ENCODE measurements at regions of chr17 and their contacts with region 1.

Region 1: GRCh38 chr17:45317112-45317928 is 500 bp upstream of the MAP3K14 start:
- DNase-seq: peak; percentile 100
- ATAC-seq: peak; percentile 85
- H3K4me3 ChIP-seq: peak overlapping the region; percentile 42
- H3K27ac ChIP-seq: peak overlapping the region; percentile 62
- H3K4me1 ChIP-seq: peaks cover 47% of the 10 kb centered on the region
- H3K27me3 ChIP-seq: no peaks in the 10 kb centered on the region
- CTCF ChIP-seq: no peak
- POLR2A ChIP-seq: no peak
- RAD21 ChIP-seq: 0 out of 2 replicates have a peak, but pooled peaks have one; percentile 14

Region 2: GRCh38 chr17:45021607-45022287 is 295.6 kb before region 1 on chr17:
- CTCF ChIA-PET with region 1: no interaction called
- POLR2A ChIA-PET with region 1: no interaction called
- dilution Hi-C with region 1: no loop called
- in situ Hi-C with region 1: no loop called
- intact Hi-C with region 1: no loop called
- DNase-seq: peak; percentile 47
- ATAC-seq: peak; percentile 77
- H3K4me3 ChIP-seq: peak overlapping the region; percentile 29
- H3K27ac ChIP-seq: peak overlapping the region; percentile 72
- H3K4me1 ChIP-seq: peaks cover 26% of the 10 kb centered on the region
- H3K27me3 ChIP-seq: peaks cover 4% of the 10 kb centered on the region; the same call in 1 of the 2 replicates
- CTCF ChIP-seq: peak; percentile 95
- POLR2A ChIP-seq: no peak
- RAD21 ChIP-seq: peak; percentile 91

Region 3: GRCh38 chr17:45197555-45198334 is 119.6 kb before region 1 on chr17:
- CTCF ChIA-PET with region 1: no interaction called
- POLR2A ChIA-PET with region 1: no interaction called
- dilution Hi-C with region 1: no loop called
- in situ Hi-C with region 1: no loop called
- intact Hi-C with region 1: no loop called
- DNase-seq: peak; percentile 77
- ATAC-seq: peak; percentile 100
- H3K4me3 ChIP-seq: no peak overlapping the region
- H3K27ac ChIP-seq: peak overlapping the region; percentile 60
- H3K4me1 ChIP-seq: peaks cover 10% of the 10 kb centered on the region
- H3K27me3 ChIP-seq: no peaks in the 10 kb centered on the region
- CTCF ChIP-seq: peak; percentile 100; the same call in 1 of the 2 replicates
- POLR2A ChIP-seq: peak; percentile 54; the same call in 1 of the 2 replicates
- RAD21 ChIP-seq: peak; percentile 100

Region 4: GRCh38 chr17:45277216-45277849 is 40.0 kb before region 1 on chr17:
- CTCF ChIA-PET with region 1: interaction called, 6 read pairs
- POLR2A ChIA-PET with region 1: interaction called, 6 read pairs
- dilution Hi-C with region 1: no loop called
- in situ Hi-C with region 1: no loop called
- intact Hi-C with region 1: loop called (anchors 1 kb)
- DNase-seq: peak; percentile 91
- ATAC-seq: peak; percentile 73
- H3K4me3 ChIP-seq: no peak overlapping the region
- H3K27ac ChIP-seq: no peak overlapping the region
- H3K4me1 ChIP-seq: peaks cover 3% of the 10 kb centered on the region; the same call in 1 of the 2 replicates
- H3K27me3 ChIP-seq: no peaks in the 10 kb centered on the region
- CTCF ChIP-seq: peak; percentile 83
- POLR2A ChIP-seq: no peak
- RAD21 ChIP-seq: peak; percentile 86

Measured in IMR-90 (cell line).